ENCODE measurements at regions of chr1 and their contacts with region 1.

Region 1: DNA sequence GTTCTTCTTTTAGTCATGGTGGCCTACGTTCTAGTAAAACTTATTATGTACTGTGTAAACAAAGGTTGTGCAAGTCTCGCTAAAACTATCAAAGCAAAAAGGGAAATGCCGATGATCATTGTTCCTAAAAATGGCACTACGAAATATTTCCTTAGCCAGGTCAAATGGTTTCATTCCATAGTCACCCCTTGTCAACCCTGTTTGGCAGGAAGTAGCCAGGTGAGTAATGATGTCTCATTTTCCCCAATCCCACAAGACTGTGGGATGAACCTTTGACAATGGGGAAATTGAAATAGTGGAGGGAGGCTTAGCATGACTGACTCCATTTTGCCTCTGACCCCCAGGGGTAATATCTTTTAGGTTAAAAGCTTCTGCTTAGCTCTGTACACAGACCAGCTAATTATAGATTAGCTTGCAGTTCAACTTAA is 5.6 kb upstream of the REN start:
- DNase-seq: peak; percentile 73
- H3K4me3 ChIP-seq: no peak overlapping the region
- H3K27ac ChIP-seq: peak overlapping the region; percentile 48
- H3K4me1 ChIP-seq: peaks cover 17% of the 10 kb centered on the region
- H3K27me3 ChIP-seq: no peaks in the 10 kb centered on the region
- CTCF ChIP-seq: no peak
- POLR2A ChIP-seq: no peak

Region 2: GRCh38 chr1:204104133-204104871 is 67.5 kb before region 1 on chr1:
- CTCF ChIA-PET with region 1: no interaction called
- POLR2A ChIA-PET with region 1: no interaction called
- dilution Hi-C with region 1: no loop called
- intact Hi-C with region 1: no loop called
- DNase-seq: peak; percentile 53
- H3K4me3 ChIP-seq: no peak overlapping the region
- H3K27ac ChIP-seq: peak overlapping the region; percentile 73
- H3K4me1 ChIP-seq: peaks cover 55% of the 10 kb centered on the region
- H3K27me3 ChIP-seq: no peaks in the 10 kb centered on the region
- CTCF ChIP-seq: no peak
- POLR2A ChIP-seq: peak; percentile 20

Region 3: GRCh38 chr1:204190212-204191211 is 18.7 kb after region 1 on chr1:
- CTCF ChIA-PET with region 1: interaction called, 6 read pairs
- POLR2A ChIA-PET with region 1: no interaction called
- dilution Hi-C with region 1: no loop called
- intact Hi-C with region 1: loop called (anchors 1 kb)
- DNase-seq: peak; percentile 81
- H3K4me3 ChIP-seq: no peak overlapping the region
- H3K27ac ChIP-seq: peak overlapping the region; percentile 90
- H3K4me1 ChIP-seq: peaks cover 32% of the 10 kb centered on the region
- H3K27me3 ChIP-seq: no peaks in the 10 kb centered on the region
- CTCF ChIP-seq: no peak
- POLR2A ChIP-seq: peak; percentile 52

Region 4: DNA sequence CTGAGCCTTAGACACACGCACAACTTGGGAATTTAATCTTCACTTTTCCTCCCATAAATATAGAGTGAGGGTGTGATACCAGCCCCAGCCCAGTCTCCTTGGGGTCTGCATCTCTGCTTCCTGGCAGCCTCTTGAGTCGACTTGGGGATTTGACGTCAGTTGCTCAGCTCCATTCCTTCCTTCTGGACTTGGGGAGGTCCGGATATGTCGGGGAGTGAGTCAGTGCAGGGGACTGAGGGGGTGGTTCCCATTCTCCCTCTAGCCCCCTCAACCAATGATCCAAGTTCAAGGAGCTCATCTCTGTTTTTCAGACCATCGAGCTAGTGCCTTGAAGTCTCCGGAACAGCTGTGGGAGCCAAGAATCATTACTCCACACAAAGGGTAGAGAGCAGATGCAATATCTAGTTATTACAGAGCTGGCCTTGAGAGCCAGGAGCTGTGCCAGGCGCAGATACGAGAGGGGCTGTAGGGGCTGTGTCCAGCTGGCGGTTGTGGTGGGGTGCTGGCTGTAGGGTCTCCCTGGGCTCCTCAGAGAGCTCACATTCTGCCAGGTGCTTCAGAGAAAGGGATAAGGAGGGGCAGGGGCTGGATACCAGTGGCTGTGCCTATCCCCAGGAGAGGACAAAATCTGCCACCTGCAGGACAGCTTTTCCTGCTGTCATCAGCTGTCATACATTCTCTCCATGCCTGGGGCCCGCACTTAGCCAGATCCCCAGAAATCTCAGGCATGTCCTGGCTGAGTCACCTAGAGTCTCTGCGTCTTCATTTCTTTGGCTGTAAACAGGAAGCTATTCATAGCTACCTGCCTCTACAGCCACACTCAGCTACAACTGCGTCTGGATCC is 26.6 kb after region 1 on chr1:
- CTCF ChIA-PET with region 1: interaction called, 770 read pairs
- POLR2A ChIA-PET with region 1: no interaction called
- dilution Hi-C with region 1: no loop called
- intact Hi-C with region 1: loop called (anchors 1 kb)
- DNase-seq: peak; percentile 89
- H3K4me3 ChIP-seq: no peak overlapping the region
- H3K27ac ChIP-seq: peak overlapping the region; percentile 87
- H3K4me1 ChIP-seq: peaks cover 32% of the 10 kb centered on the region
- H3K27me3 ChIP-seq: no peaks in the 10 kb centered on the region
- CTCF ChIP-seq: no peak
- POLR2A ChIP-seq: no peak